ENCODE measurements at regions of chr4 and their contacts with region 1.

Region 1: DNA sequence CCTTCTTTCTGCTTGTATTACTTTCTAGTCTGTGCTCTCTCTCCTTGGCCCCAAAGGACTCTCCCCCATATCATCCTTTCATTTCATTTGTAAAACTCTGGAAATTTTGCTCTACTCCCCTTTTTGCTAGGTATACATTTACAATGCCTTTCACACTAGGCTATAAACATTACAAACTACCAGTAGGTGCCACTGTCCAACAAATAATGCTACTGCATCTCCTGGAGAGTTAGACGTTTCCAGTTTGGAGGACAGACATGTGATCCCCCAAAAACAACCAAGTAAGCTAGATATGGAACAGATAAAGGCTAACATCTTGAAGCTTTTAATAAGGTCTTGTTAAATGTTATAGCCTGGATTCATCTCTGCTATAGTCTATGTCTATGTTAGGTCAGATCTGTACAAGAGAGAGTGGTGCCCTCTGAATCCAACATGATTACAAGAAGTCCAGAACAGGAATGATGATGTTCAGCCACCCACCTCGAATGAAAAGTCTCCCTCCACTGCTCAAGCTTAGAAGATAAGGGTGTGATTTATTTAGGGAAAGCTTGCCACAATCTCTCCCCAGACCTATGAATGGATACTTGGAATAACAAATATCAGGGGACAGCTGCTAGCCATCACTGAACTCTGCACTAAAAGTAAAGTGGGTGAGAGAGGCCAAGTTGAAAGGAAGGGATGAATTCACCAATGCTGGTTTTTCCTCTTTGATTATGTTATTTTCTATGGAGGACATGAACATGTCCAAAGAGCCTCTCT is 14.3 kb downstream of the CBR4 start:
- DNase-seq: peak in 2 of 9 experiments; percentile 41 to 46
- ATAC-seq: no peak
- H3K4me3 ChIP-seq: no peak overlapping the region
- H3K4me3 Mint-ChIP-seq: no peak overlapping the region
- H3K27ac ChIP-seq: no peak overlapping the region
- H3K27ac Mint-ChIP-seq: no peak overlapping the region
- H3K4me1 ChIP-seq: no peaks in the 10 kb centered on the region
- H3K4me1 Mint-ChIP-seq: peaks cover 9% of the 10 kb centered on the region
- H3K27me3 ChIP-seq: no peaks in the 10 kb centered on the region
- H3K27me3 Mint-ChIP-seq: no peaks in the 10 kb centered on the region
- CTCF ChIP-seq: no peak

Region 2: GRCh38 chr4:169017971-169018370 is 22.3 kb after region 1 on chr4:
- CTCF ChIA-PET with region 1: no interaction called
- POLR2A ChIA-PET with region 1: no interaction called
- intact Hi-C with region 1: no loop called
- DNase-seq: no peak
- ATAC-seq: no peak
- H3K4me3 ChIP-seq: no peak overlapping the region
- H3K4me3 Mint-ChIP-seq: no peak overlapping the region
- H3K27ac ChIP-seq: peak overlapping the region in 1 of 2 experiments; percentile 12
- H3K27ac Mint-ChIP-seq: no peak overlapping the region
- H3K4me1 ChIP-seq: peaks cover 14% of the 10 kb centered on the region
- H3K4me1 Mint-ChIP-seq: peaks cover 21% of the 10 kb centered on the region
- H3K27me3 ChIP-seq: no peaks in the 10 kb centered on the region
- H3K27me3 Mint-ChIP-seq: peaks cover 8% of the 10 kb centered on the region
- CTCF ChIP-seq: no peak

Region 3: GRCh38 chr4:169485791-169486742 is 490.4 kb after region 1 on chr4:
- CTCF ChIA-PET with region 1: interaction called, 10 read pairs
- POLR2A ChIA-PET with region 1: no interaction called
- intact Hi-C with region 1: loop called (anchors 1 to 2 kb)
- DNase-seq: peak in 5 of 9 experiments; percentile 2 to 57 (median 18)
- ATAC-seq: no peak
- H3K4me3 ChIP-seq: no peak overlapping the region
- H3K4me3 Mint-ChIP-seq: no peak overlapping the region
- H3K27ac ChIP-seq: no peak overlapping the region
- H3K27ac Mint-ChIP-seq: no peak overlapping the region
- H3K4me1 ChIP-seq: no peaks in the 10 kb centered on the region
- H3K4me1 Mint-ChIP-seq: peaks cover 3% of the 10 kb centered on the region
- H3K27me3 ChIP-seq: no peaks in the 10 kb centered on the region
- H3K27me3 Mint-ChIP-seq: no peaks in the 10 kb centered on the region
- CTCF ChIP-seq: peak; percentile 60

Region 4: GRCh38 chr4:169566021-169566818 is 570.5 kb after region 1 on chr4:
- CTCF ChIA-PET with region 1: no interaction called
- POLR2A ChIA-PET with region 1: no interaction called
- intact Hi-C with region 1: loop called (anchors 1 to 5 kb)
- DNase-seq: peak in 4 of 9 experiments; percentile 36 to 63 (median 46)
- ATAC-seq: peak; percentile 52
- H3K4me3 ChIP-seq: no peak overlapping the region
- H3K4me3 Mint-ChIP-seq: no peak overlapping the region
- H3K27ac ChIP-seq: no peak overlapping the region
- H3K27ac Mint-ChIP-seq: no peak overlapping the region
- H3K4me1 ChIP-seq: no peaks in the 10 kb centered on the region
- H3K4me1 Mint-ChIP-seq: peaks cover 3% of the 10 kb centered on the region
- H3K27me3 ChIP-seq: no peaks in the 10 kb centered on the region
- H3K27me3 Mint-ChIP-seq: no peaks in the 10 kb centered on the region
- CTCF ChIP-seq: peak; percentile 56